Dorsolateral prefrontal cortex (tissue), 120 donors: ENCODE measurements at regions of chr6 and their contacts with region 1.

Region 1: DNA sequence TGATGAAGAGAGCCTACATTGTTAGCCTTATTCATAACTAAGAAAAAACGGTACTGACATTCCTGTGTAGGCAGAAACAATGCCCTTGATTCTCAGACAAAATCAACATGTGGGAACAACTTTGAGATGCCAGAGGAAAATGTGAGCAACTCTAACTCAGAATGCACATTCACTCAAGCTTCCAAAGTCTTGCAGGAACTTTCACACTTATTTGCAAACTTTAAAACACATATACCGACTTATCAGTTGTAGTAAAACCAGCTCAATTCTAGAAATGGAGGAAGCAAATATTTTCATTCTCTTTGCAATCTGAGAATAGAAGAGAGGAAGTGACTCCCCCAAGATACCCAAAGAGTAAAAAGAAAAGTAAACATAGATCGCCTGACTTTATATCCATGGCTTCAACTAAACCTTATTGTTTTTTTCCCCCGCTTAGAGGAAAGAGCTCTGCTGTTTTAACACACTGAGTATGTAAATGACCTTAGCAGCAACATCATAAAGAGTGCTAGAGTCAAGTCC is 117.6 kb downstream of the EPB41L2 start:
- DNase-seq: no peak
- H3K4me3 ChIP-seq: peak overlapping the region in 4 of 59 donors; percentile 0 to 9 (median 6)
- H3K27ac ChIP-seq: peak overlapping the region in 56 of 59 donors; percentile 29 to 94 (median 84)
- H3K27me3 ChIP-seq: no peaks in the 10 kb centered on the region
- CTCF ChIP-seq: no peak

Region 2: GRCh38 chr6:131001111-131001736 is 55.8 kb after region 1 on chr6:
- intact Hi-C with region 1: loop called in 1 of 2 experiments (anchors 5 kb)
- DNase-seq: peak in 3 of 10 donors; percentile 25 to 65 (median 48)
- H3K4me3 ChIP-seq: peak overlapping the region in 47 of 59 donors; percentile 1 to 58 (median 22)
- H3K27ac ChIP-seq: peak overlapping the region in 47 of 59 donors; percentile 17 to 85 (median 61)
- H3K27me3 ChIP-seq: no peaks in the 10 kb centered on the region
- CTCF ChIP-seq: peak in 1 of 56 donors; percentile 12

Region 3: DNA sequence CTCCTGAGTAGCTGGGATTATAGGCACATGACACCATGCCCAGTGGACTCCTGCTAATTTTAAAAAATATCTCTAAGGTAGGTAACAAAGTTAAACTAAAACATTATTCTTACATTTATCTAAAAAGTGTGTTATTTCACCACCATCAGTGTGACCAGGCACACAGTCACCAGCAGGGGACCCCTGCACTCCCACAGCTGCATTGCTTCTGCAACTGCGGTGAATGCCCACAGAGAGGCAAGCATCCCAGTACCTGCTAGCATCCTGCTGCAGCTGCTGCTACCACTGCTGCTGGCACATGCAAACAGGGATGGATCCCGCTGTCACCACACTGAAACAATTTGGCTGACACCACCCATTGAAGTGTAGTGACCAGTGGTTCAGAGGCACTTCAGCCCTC is 139.5 kb after region 1 on chr6:
- intact Hi-C with region 1: no loop called
- DNase-seq: no peak
- H3K4me3 ChIP-seq: no peak overlapping the region
- H3K27ac ChIP-seq: no peak overlapping the region
- H3K27me3 ChIP-seq: no peaks in the 10 kb centered on the region
- CTCF ChIP-seq: peak in 1 of 56 donors; percentile 14